B cell (primary cell): ENCODE measurements at regions of chr2 and their contacts with region 1.

Region 1: GRCh38 chr2:241355983-241356870 is at the start of gene FARP2:
- DNase-seq: peak; percentile 99
- ATAC-seq: peak; percentile 87
- H3K4me3 ChIP-seq: peak within 1 kb of the TSS; percentile 51 to 80 (median 77)
- H3K4me3 Mint-ChIP-seq: peak within 1 kb of the TSS; percentile 90
- H3K27ac ChIP-seq: peak within 1 kb of the TSS; percentile 54 to 82
- H3K27ac Mint-ChIP-seq: peak within 1 kb of the TSS; percentile 96
- H3K4me1 ChIP-seq: peaks cover 33 to 38% of the 10 kb centered on the region in 2 donors
- H3K4me1 Mint-ChIP-seq: peaks cover 39% of the 10 kb centered on the region
- H3K27me3 ChIP-seq: no peaks in the 10 kb centered on the region
- H3K27me3 Mint-ChIP-seq: no peaks in the 10 kb centered on the region
- CTCF ChIP-seq: no peak
- total RNA-seq, gene FARP2: 114 and 151 TPM in 2 replicates

Region 2: DNA sequence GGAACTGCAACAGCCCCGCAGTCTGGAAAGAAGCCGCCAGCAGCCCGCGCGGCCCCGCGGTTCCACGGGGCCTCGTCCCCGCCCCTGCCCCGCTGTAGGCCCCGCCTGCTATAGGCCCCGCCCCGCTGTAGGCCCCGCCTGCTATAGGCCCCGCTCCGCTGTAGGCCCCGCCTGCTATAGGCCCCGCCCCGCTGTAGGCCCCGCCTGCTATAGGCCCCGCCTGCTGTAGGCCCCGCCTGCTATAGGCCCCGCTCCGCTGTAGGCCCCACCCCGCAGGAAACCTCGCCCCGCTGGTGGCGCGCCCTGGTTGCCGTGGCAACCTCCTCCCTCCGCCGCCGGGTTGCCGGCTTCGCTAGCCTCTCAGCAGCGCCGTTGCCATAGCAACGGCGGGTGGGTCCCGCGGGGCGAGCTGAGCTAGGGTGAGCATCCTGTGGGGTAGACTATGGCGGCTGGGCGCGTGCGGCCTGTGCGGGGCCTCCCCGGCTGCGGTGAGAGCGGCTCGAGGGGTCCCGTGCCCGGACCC is 524.0 kb before region 1 on chr2:
- CTCF ChIA-PET with region 1: no interaction called
- POLR2A ChIA-PET with region 1: no interaction called
- intact Hi-C with region 1: loop called (anchors 2 kb)
- DNase-seq: peak; percentile 98
- ATAC-seq: peak; percentile 92
- H3K4me3 ChIP-seq: peak overlapping the region in 3 of 5 experiments; percentile 39 to 56 (median 41)
- H3K4me3 Mint-ChIP-seq: peak overlapping the region; percentile 73
- H3K27ac ChIP-seq: no peak overlapping the region
- H3K27ac Mint-ChIP-seq: no peak overlapping the region
- H3K4me1 ChIP-seq: peaks cover 6 to 12% of the 10 kb centered on the region in 2 donors
- H3K4me1 Mint-ChIP-seq: peaks cover 6% of the 10 kb centered on the region
- H3K27me3 ChIP-seq: peaks cover 0 to 36% (median 20%) of the 10 kb centered on the region in 4 experiments
- H3K27me3 Mint-ChIP-seq: peaks cover 29% of the 10 kb centered on the region
- CTCF ChIP-seq: no peak

Region 3: DNA sequence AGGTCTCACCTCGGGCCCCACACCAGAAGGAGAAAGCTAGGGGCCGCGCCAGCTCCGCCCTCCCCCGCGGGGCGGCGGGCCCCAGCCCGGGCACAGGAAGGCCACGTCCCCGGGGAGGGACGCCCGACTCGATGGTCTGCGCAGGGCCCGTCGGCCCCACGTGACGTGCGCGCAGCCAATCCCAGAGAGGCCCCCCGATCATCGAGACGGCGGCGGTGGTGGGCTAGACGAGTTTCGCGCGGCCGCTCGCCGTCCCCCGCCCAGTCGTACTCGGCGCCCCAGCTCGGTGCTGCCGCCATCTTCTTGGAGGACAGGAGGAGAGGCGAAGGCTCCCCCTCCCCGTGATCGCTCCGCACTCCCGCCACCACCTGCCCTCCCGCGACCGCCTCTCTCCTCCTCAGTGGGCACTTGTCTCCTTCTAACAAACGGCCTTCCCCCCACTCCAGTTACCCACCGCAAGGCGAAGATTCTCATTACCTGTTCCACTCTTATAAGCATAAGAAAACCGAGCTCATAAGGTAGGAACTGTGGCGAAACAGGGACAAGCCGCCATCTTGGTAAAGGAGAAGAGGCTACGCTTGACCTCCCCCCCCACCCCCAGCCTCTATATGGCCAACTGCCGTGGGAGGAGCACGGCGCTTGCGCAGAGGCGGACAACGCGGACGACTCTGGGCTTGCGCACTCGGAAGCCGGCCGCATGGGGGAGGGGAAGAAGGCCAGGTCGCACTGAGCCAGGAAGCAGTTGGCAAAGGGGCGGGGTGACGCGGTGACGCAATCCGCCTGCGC is 40.9 kb before region 1 on chr2 and contains the start of gene HDLBP:
- CTCF ChIA-PET with region 1: interaction called, 6 read pairs
- POLR2A ChIA-PET with region 1: interaction called, 16 read pairs
- intact Hi-C with region 1: loop called (anchors 1 kb)
- DNase-seq: peak; percentile 100
- ATAC-seq: peak; percentile 69
- H3K4me3 ChIP-seq: peak within 1 kb of the TSS; percentile 90 to 99 (median 91)
- H3K4me3 Mint-ChIP-seq: peak within 1 kb of the TSS; percentile 95
- H3K27ac ChIP-seq: peak within 1 kb of the TSS; percentile 98 to 99
- H3K27ac Mint-ChIP-seq: peak within 1 kb of the TSS; percentile 99
- H3K4me1 ChIP-seq: peaks cover 43 to 47% of the 10 kb centered on the region in 2 donors
- H3K4me1 Mint-ChIP-seq: peaks cover 72% of the 10 kb centered on the region
- H3K27me3 ChIP-seq: no peaks in the 10 kb centered on the region
- H3K27me3 Mint-ChIP-seq: no peaks in the 10 kb centered on the region
- CTCF ChIP-seq: peak; percentile 39
- total RNA-seq, gene HDLBP: 127 and 153 TPM in 2 replicates

Region 4: GRCh38 chr2:241391892-241392665 is 35.9 kb after region 1 on chr2:
- CTCF ChIA-PET with region 1: interaction called, 22 read pairs
- POLR2A ChIA-PET with region 1: no interaction called
- intact Hi-C with region 1: loop called (anchors 2 kb)
- DNase-seq: peak; percentile 34
- ATAC-seq: peak; percentile 14
- H3K4me3 ChIP-seq: no peak overlapping the region
- H3K4me3 Mint-ChIP-seq: no peak overlapping the region
- H3K27ac ChIP-seq: no peak overlapping the region
- H3K27ac Mint-ChIP-seq: peak overlapping the region; percentile 26
- H3K4me1 ChIP-seq: peaks cover 28 to 43% of the 10 kb centered on the region in 2 donors
- H3K4me1 Mint-ChIP-seq: peaks cover 46% of the 10 kb centered on the region
- H3K27me3 ChIP-seq: no peaks in the 10 kb centered on the region
- H3K27me3 Mint-ChIP-seq: no peaks in the 10 kb centered on the region
- CTCF ChIP-seq: no peak

Region 5: DNA sequence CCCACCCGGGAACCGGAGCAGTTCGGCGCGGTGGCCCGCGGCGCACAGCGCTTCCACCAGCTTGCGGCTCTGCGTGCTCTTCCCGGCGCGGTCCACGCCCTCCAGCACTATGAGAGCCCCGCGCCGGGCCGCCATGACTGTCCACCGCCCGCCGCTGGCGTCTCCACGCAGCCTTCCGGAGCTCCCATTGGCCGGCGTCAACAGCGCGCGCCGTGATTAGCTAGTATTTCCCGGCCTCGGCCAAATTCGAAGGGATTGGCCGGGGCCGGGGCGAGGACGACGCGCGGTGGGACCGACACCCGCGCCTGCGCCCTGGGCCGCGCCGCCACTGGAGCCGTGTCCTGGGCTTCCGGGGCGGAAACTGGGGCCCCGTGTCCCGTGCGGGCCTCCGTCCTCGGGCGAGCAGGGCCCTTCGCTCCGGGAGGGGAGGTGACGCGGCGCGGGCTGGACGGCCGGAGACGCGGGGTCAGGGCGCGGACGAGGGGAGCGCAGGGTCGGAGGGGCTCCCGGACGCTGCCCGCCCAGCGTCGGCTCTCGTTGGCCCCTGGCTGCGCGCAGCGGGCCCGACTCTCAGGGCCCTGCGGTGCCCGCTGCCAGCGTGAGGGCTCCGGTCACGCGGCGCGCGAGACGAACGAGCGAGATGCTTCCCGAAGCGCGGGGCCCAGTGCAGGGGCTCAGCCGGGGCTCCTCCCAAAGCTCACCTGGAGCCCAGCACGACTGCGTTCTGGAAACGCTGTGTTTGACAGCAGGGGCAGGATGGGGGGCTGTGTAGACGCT is 330.6 kb after region 1 on chr2 and contains the start of gene DTYMK:
- CTCF ChIA-PET with region 1: no interaction called
- POLR2A ChIA-PET with region 1: no interaction called
- intact Hi-C with region 1: loop called (anchors 5 kb)
- DNase-seq: peak; percentile 97
- ATAC-seq: peak; percentile 95
- H3K4me3 ChIP-seq: peak within 1 kb of the TSS; percentile 71 to 91 (median 82)
- H3K4me3 Mint-ChIP-seq: peak within 1 kb of the TSS; percentile 84
- H3K27ac ChIP-seq: peak within 1 kb of the TSS; percentile 61 to 91
- H3K27ac Mint-ChIP-seq: peak within 1 kb of the TSS; percentile 68
- H3K4me1 ChIP-seq: peaks cover 8 to 19% of the 10 kb centered on the region in 2 donors
- H3K4me1 Mint-ChIP-seq: peaks cover 26% of the 10 kb centered on the region
- H3K27me3 ChIP-seq: no peaks in the 10 kb centered on the region
- H3K27me3 Mint-ChIP-seq: no peaks in the 10 kb centered on the region
- CTCF ChIP-seq: no peak
- total RNA-seq, gene DTYMK: 20.7 and 26.3 TPM in 2 replicates